ENCODE measurements at regions of chr5 and their contacts with region 1.

Region 1: GRCh38 chr5:157148734-157149615 is 6.3 kb upstream of the MED7 start:
- DNase-seq: peak; percentile 91
- ATAC-seq: peak; percentile 45
- H3K4me3 Mint-ChIP-seq: peak overlapping the region; percentile 6
- H3K27ac Mint-ChIP-seq: peak overlapping the region; percentile 80
- H3K4me1 Mint-ChIP-seq: peaks cover 46% of the 10 kb centered on the region
- H3K27me3 Mint-ChIP-seq: no peaks in the 10 kb centered on the region
- CTCF ChIP-seq: peak; percentile 89

Region 2: GRCh38 chr5:157167214-157167621 is 18.2 kb after region 1 on chr5:
- CTCF ChIA-PET with region 1: interaction called, 16 read pairs
- POLR2A ChIA-PET with region 1: interaction called, 280 read pairs
- intact Hi-C with region 1: no loop called
- DNase-seq: peak; percentile 41
- ATAC-seq: peak; percentile 75
- H3K4me3 Mint-ChIP-seq: peak overlapping the region; percentile 56
- H3K27ac Mint-ChIP-seq: peak overlapping the region; percentile 88
- H3K4me1 Mint-ChIP-seq: peaks cover 72% of the 10 kb centered on the region
- H3K27me3 Mint-ChIP-seq: no peaks in the 10 kb centered on the region
- CTCF ChIP-seq: no peak

Region 3: GRCh38 chr5:157180374-157181264 is 31.6 kb after region 1 on chr5 and contains the start of gene ITK:
- CTCF ChIA-PET with region 1: interaction called, 29 read pairs
- POLR2A ChIA-PET with region 1: interaction called, 280 read pairs
- intact Hi-C with region 1: loop called (anchors 2 kb)
- DNase-seq: peak; percentile 59
- ATAC-seq: peak; percentile 62
- H3K4me3 Mint-ChIP-seq: peak within 1 kb of the TSS; percentile 99
- H3K27ac Mint-ChIP-seq: peak within 1 kb of the TSS; percentile 100
- H3K4me1 Mint-ChIP-seq: peaks cover 40% of the 10 kb centered on the region
- H3K27me3 Mint-ChIP-seq: no peaks in the 10 kb centered on the region
- CTCF ChIP-seq: no peak
- total RNA-seq, gene ITK: 229 to 236 TPM

Region 4: GRCh38 chr5:157204765-157205164 is 55.8 kb after region 1 on chr5:
- CTCF ChIA-PET with region 1: interaction called, 12 read pairs
- POLR2A ChIA-PET with region 1: interaction called, 207 read pairs
- intact Hi-C with region 1: no loop called
- DNase-seq: no peak
- ATAC-seq: no peak
- H3K4me3 Mint-ChIP-seq: peak overlapping the region; percentile 66
- H3K27ac Mint-ChIP-seq: peak overlapping the region; percentile 91
- H3K4me1 Mint-ChIP-seq: peaks cover 82% of the 10 kb centered on the region
- H3K27me3 Mint-ChIP-seq: no peaks in the 10 kb centered on the region
- CTCF ChIP-seq: no peak

Region 5: GRCh38 chr5:157265714-157266285 is 116.8 kb after region 1 on chr5 and contains the start of gene CYFIP2:
- CTCF ChIA-PET with region 1: interaction called, 14 read pairs
- POLR2A ChIA-PET with region 1: interaction called, 3 read pairs
- intact Hi-C with region 1: loop called (anchors 5 kb)
- DNase-seq: peak; percentile 90
- ATAC-seq: peak; percentile 80
- H3K4me3 Mint-ChIP-seq: peak within 1 kb of the TSS; percentile 91
- H3K27ac Mint-ChIP-seq: peak within 1 kb of the TSS; percentile 97
- H3K4me1 Mint-ChIP-seq: peaks cover 65% of the 10 kb centered on the region
- H3K27me3 Mint-ChIP-seq: no peaks in the 10 kb centered on the region
- CTCF ChIP-seq: no peak
- total RNA-seq, gene CYFIP2: 350 to 351 TPM

Region 6: GRCh38 chr5:157312492-157312891 is 163.5 kb after region 1 on chr5:
- CTCF ChIA-PET with region 1: interaction called, 15 read pairs
- POLR2A ChIA-PET with region 1: interaction called, 4 read pairs
- intact Hi-C with region 1: loop called (anchors 5 kb)
- DNase-seq: peak; percentile 77
- ATAC-seq: peak; percentile 94
- H3K4me3 Mint-ChIP-seq: no peak overlapping the region
- H3K27ac Mint-ChIP-seq: peak overlapping the region; percentile 91
- H3K4me1 Mint-ChIP-seq: peaks cover 41% of the 10 kb centered on the region
- H3K27me3 Mint-ChIP-seq: no peaks in the 10 kb centered on the region
- CTCF ChIP-seq: peak; percentile 78

Region 7: GRCh38 chr5:157989296-157989695 is 840.3 kb after region 1 on chr5:
- CTCF ChIA-PET with region 1: no interaction called
- POLR2A ChIA-PET with region 1: no interaction called
- intact Hi-C with region 1: no loop called
- DNase-seq: no peak
- ATAC-seq: no peak
- H3K4me3 Mint-ChIP-seq: no peak overlapping the region
- H3K27ac Mint-ChIP-seq: no peak overlapping the region
- H3K4me1 Mint-ChIP-seq: peaks cover 4% of the 10 kb centered on the region
- H3K27me3 Mint-ChIP-seq: peaks cover 15% of the 10 kb centered on the region
- CTCF ChIP-seq: no peak